ENCODE measurements at regions of chr17 and their contacts with region 1.

Region 1: DNA sequence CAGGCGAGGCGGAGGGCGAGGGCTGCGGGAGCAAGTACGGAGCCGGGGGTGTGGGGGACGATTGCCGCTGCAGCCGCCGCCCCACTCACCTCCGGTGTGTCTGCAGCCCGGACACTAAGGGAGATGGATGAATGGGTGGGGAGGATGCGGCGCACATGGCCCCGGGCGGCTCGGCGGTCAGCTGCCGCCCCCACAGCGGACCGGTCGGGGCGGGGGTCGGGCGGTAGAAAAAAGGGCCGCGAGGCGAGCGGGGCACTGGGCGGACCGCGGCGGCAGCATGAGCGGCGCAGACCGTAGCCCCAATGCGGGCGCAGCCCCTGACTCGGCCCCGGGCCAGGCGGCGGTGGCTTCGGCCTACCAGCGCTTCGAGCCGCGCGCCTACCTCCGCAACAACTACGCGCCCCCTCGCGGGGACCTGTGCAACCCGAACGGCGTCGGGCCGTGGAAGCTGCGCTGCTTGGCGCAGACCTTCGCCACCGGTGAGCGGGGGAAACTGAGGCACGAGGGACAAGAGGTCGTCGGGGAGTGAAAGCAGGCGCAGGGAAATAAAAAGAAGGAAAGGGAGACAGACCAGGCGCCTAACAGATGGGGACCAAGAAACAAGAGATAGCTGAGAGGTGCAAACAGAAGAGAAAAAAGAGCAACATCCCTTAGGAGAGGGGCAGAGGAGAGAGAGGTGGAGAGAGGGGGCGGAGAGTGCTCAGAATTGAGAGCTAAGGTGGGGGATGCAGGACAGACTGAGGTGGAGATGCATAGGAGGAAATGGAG is at the start of gene PNMT:
- H3K4me3 ChIP-seq: peak within 1 kb of the TSS; percentile 34
- H3K27ac ChIP-seq: peak within 1 kb of the TSS; percentile 69; the same call in 1 of the 2 replicates
- H3K4me1 ChIP-seq: peaks cover 6% of the 10 kb centered on the region
- CTCF ChIP-seq: peak; percentile 96

Region 2: GRCh38 chr17:39636927-39637736 is 31.3 kb before region 1 on chr17 and contains the start of gene STARD3:
- CTCF ChIA-PET with region 1: interaction called, 42 read pairs
- POLR2A ChIA-PET with region 1: no interaction called
- H3K4me3 ChIP-seq: peak within 1 kb of the TSS; percentile 88
- H3K27ac ChIP-seq: peak within 1 kb of the TSS; percentile 76
- H3K4me1 ChIP-seq: peaks cover 25% of the 10 kb centered on the region
- CTCF ChIP-seq: peak; percentile 90

Region 3: DNA sequence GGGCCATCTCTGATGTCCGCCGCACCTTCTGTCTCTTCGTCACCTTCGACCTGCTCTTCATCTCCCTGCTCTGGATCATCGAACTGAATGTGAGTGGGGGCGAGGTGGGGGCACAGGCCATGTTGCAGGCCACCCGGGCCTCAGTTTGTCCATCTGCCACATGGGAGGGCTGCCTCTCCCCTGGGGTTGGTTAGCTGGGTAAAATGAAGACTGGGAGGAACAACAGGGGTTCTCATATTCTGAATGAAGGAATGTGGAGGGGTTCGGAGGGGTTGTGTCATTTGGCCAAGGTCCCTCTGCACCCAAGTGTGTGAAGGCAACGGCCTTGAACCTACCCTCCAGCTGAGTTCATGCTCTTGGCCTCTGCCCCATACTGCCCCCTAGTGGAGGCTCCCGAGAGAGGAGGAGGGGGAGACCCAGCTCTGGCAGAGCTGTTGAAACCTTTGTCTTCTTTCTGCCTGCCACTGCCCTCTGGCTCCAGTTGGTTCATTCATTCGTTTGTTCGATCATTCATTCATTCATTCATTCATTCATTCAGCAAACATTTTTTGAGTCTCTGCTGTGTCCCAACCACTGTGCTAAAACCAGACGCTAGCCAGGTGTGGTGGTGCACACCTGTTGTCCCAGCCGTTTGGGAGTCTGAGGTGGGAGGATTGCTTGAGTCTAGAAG is 14.6 kb before region 1 on chr17:
- CTCF ChIA-PET with region 1: interaction called, 120 read pairs
- POLR2A ChIA-PET with region 1: interaction called, 5 read pairs
- H3K4me3 ChIP-seq: no peak overlapping the region
- H3K27ac ChIP-seq: no peak overlapping the region
- H3K4me1 ChIP-seq: peaks cover 2% of the 10 kb centered on the region; the same call in 1 of the 2 replicates
- CTCF ChIP-seq: peak; percentile 64

Region 4: GRCh38 chr17:39699818-39700147 is 31.4 kb after region 1 on chr17 and contains the start of gene ERBB2:
- CTCF ChIA-PET with region 1: interaction called, 4 read pairs
- POLR2A ChIA-PET with region 1: interaction called, 17 read pairs
- H3K4me3 ChIP-seq: peak within 1 kb of the TSS; percentile 81
- H3K27ac ChIP-seq: peak within 1 kb of the TSS; percentile 68; the same call in 1 of the 2 replicates
- H3K4me1 ChIP-seq: peaks cover 13% of the 10 kb centered on the region; the same call in 1 of the 2 replicates
- CTCF ChIP-seq: no peak

Region 5: DNA sequence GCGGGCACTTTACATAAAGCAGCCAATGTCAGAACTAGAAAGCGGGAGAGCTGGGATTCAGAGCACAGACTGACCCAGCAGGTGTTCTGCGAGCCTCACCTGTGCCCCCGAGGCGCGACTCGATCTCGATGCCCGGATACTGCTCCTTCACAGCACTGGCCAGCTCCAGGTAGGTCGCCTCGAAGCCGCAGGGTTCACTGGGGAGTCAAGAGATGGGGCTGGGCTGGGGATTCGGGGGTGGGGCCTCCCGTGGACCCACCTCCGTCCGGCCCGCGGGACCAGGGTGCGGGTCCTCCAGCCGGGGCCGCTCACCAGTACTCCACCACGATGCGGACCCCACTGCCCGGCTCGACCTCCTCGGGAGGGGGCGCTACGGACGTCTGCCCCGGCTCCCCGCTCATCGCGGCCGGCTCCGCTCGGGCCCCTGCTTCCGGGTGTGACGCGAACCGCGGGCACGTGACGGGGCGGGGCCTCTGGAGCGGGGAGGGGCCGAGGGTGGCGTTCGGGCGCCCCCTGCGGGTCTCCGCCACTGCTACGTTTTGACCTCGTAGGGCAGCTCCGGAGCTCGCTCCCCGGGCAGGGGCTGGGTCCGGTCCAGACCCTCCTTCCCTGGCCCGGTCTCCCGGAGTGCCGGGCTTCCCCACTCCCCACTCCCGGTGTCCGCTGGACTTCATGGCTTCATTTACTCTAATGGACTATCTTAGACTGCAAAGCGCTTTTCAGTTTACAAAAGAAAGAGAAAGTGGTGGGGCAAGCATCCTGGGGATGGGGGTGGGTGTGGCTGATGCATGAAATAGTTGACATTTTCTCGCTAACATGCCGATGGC is 61.9 kb after region 1 on chr17 and contains the start of gene MIEN1:
- CTCF ChIA-PET with region 1: interaction called, 26 read pairs
- POLR2A ChIA-PET with region 1: interaction called, 7 read pairs
- H3K4me3 ChIP-seq: peak within 1 kb of the TSS; percentile 90
- H3K27ac ChIP-seq: peak within 1 kb of the TSS; percentile 61; the same call in 1 of the 2 replicates
- H3K4me1 ChIP-seq: 0 out of 2 replicates have a peak, but pooled peaks cover 3% of the 10 kb centered on the region
- CTCF ChIP-seq: peak; percentile 93

Region 6: DNA sequence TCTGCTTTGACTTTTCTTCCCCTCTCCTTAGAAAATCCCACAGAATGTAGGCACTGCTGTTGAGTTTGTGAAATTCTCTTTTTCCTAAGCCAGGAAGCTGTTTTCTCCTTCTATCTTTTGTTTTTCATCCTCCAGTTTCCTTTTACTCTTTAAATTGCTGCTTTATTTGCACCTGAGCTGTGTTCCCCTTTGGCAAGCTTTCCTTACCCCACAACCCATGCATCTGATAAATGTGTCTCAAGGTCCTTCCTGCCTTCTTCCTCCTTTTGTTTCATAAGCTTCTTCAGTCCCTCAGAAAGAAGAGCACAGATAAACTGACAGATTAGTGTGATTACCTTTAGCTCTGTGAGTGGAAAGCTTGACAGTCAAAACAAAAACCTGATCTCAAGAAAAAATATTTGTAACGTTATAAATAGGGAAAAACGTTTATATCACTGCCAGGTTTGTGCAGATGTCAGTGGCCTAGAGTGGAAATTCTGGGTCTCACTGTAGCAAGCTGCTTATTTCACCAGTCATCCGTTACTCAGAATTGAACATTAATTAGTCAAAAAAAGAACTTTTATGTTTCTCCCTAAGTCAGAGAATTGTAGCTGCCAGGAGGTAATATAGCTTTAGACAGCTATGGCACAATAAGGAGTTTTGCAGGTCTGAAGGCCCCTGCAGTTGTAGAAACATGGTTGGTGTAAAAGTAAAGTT is 226.4 kb after region 1 on chr17:
- CTCF ChIA-PET with region 1: no interaction called
- POLR2A ChIA-PET with region 1: no interaction called
- H3K4me3 ChIP-seq: no peak overlapping the region
- H3K27ac ChIP-seq: no peak overlapping the region
- H3K4me1 ChIP-seq: no peaks in the 10 kb centered on the region
- CTCF ChIP-seq: no peak